ENCODE measurements at regions of chrX and their contacts with region 1.

Region 1: GRCh38 chrX:18674788-18675735 is 3.2 kb upstream of the RS1 start:
- DNase-seq: peak; percentile 74 to 89 (median 78)
- ATAC-seq: peak; percentile 92 to 96 (median 93)
- H3K4me3 ChIP-seq: peak overlapping the region; percentile 36 to 93 (median 69)
- H3K27ac ChIP-seq: peak overlapping the region in 11 of 12 donors; percentile 76 to 92 (median 85)
- H3K4me1 ChIP-seq: no peaks in the 10 kb centered on the region
- H3K27me3 ChIP-seq: peaks cover 0 to 4% (median 0%) of the 10 kb centered on the region in 9 donors
- CTCF ChIP-seq: no peak
- POLR2A ChIP-seq: peak in 1 of 2 donors; percentile 34

Region 2: GRCh38 chrX:18707426-18708049 is 32.5 kb after region 1 on chrX and contains the start of gene PPEF1:
- intact Hi-C with region 1: no loop called
- DNase-seq: no peak
- ATAC-seq: no peak
- H3K4me3 ChIP-seq: no peak within 1 kb of the TSS
- H3K27ac ChIP-seq: no peak within 1 kb of the TSS
- H3K4me1 ChIP-seq: no peaks in the 10 kb centered on the region
- H3K27me3 ChIP-seq: peaks cover 0 to 10% (median 0%) of the 10 kb centered on the region in 9 donors
- CTCF ChIP-seq: no peak
- POLR2A ChIP-seq: no peak
- total RNA-seq, gene PPEF1: 0.23 to 0.82 (median 0.71) TPM in 5 of 9 donors, not detected in the others

Region 3: GRCh38 chrX:18873189-18873791 is 198.2 kb after region 1 on chrX:
- intact Hi-C with region 1: loop called in 1 of 10 experiments (anchors 10 kb)
- DNase-seq: peak in 4 of 5 donors; percentile 15 to 67 (median 54)
- ATAC-seq: peak; percentile 83 to 92 (median 90)
- H3K4me3 ChIP-seq: peak overlapping the region in 3 of 12 donors; percentile 3 to 12 (median 12)
- H3K27ac ChIP-seq: peak overlapping the region; percentile 47 to 84 (median 75)
- H3K4me1 ChIP-seq: peaks cover 0 to 25% (median 10%) of the 10 kb centered on the region in 12 donors
- H3K27me3 ChIP-seq: no peaks in the 10 kb centered on the region
- CTCF ChIP-seq: no peak
- POLR2A ChIP-seq: no peak